ENCODE measurements at regions of chr7 and their contacts with region 1.

Region 1: GRCh38 chr7:73921623-73922528 is 60.9 kb downstream of the TMEM270 start:
- DNase-seq: no peak
- ATAC-seq: peak; percentile 61
- H3K4me3 ChIP-seq: no peak overlapping the region
- H3K27ac ChIP-seq: no peak overlapping the region
- H3K4me1 ChIP-seq: 0 out of 2 replicates have a peak, but pooled peaks cover 6% of the 10 kb centered on the region
- H3K27me3 ChIP-seq: no peaks in the 10 kb centered on the region; the same call in 1 of the 2 replicates
- CTCF ChIP-seq: no peak

Region 2: GRCh38 chr7:73997056-73997455 is 75.2 kb after region 1 on chr7:
- CTCF ChIA-PET with region 1: interaction called, 11 read pairs
- POLR2A ChIA-PET with region 1: no interaction called
- in situ Hi-C with region 1: no loop called
- intact Hi-C with region 1: no loop called
- DNase-seq: no peak
- ATAC-seq: no peak
- H3K4me3 ChIP-seq: no peak overlapping the region
- H3K27ac ChIP-seq: no peak overlapping the region
- H3K4me1 ChIP-seq: no peaks in the 10 kb centered on the region
- H3K27me3 ChIP-seq: no peaks in the 10 kb centered on the region
- CTCF ChIP-seq: no peak

Measured in Panc1 (cell line).